GM18951 (cell line): ENCODE measurements at regions of chr6 and their contacts with region 1.

Region 1: DNA sequence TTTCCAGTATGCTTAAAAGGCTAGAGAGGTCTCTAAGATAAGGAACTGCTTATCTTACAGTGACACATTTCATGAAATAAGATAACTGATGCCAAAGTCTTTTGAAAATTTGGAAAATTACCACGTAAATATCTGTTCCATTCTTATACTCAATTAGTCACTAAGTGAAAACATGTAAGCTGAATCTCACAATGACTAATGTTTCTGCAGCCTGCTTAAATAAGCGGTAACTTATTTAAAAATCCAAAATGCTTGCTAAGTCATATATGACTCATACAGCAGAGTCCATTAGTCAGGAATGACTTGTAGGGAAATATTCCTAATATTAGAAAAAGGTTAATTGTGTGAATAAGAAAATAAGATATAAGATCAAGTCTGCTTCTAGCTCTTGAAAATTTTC is 27.8 kb upstream of the LGSN start:
- POLR2A ChIP-seq: no peak

Region 2: DNA sequence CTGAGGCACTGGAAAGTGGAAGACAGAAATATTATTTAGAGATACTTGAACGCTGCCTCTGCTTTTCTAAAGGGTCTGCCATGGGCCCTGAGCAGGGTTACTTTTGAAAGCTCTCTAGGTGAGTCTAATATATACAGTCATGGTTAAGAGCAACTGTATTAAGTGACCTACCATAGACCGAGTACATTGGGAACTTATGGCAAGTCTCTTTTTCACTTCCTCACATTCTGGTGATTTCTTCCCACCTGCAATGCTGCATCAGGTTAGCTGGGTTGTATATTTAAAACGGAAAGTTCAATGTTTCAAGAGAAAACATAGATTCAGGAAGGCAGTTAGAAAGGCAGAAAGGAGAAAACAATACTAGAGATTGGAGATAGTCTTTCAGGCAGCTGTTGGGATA is 442.7 kb after region 1 on chr6:
- in situ Hi-C with region 1: loop called (anchors 25 kb)
- POLR2A ChIP-seq: no peak